Activated naive CD4-positive, alpha-beta T cell treated with anti-CD3 and anti-CD28 coated beads for 36 hours (primary cell): ENCODE measurements at regions of chr3 and their contacts with region 1.

Region 1: GRCh38 chr3:112582244-112582874 is 20.5 kb downstream of the SLC35A5 start:
- DNase-seq: peak; percentile 70
- H3K4me3 Mint-ChIP-seq: no peak overlapping the region
- H3K27ac Mint-ChIP-seq: no peak overlapping the region
- H3K4me1 Mint-ChIP-seq: peaks cover 6% of the 10 kb centered on the region
- H3K27me3 Mint-ChIP-seq: no peaks in the 10 kb centered on the region

Region 2: GRCh38 chr3:112602217-112602838 is 20.0 kb after region 1 on chr3:
- CTCF ChIA-PET with region 1: interaction called, 11 read pairs
- intact Hi-C with region 1: no loop called
- DNase-seq: no peak
- H3K4me3 Mint-ChIP-seq: no peak overlapping the region
- H3K27ac Mint-ChIP-seq: no peak overlapping the region
- H3K4me1 Mint-ChIP-seq: peaks cover 19% of the 10 kb centered on the region
- H3K27me3 Mint-ChIP-seq: peaks cover 11% of the 10 kb centered on the region

Region 3: GRCh38 chr3:112619295-112619694 is 36.9 kb after region 1 on chr3:
- CTCF ChIA-PET with region 1: interaction called, 10 read pairs
- intact Hi-C with region 1: no loop called
- DNase-seq: no peak
- H3K4me3 Mint-ChIP-seq: no peak overlapping the region
- H3K27ac Mint-ChIP-seq: no peak overlapping the region
- H3K4me1 Mint-ChIP-seq: no peaks in the 10 kb centered on the region
- H3K27me3 Mint-ChIP-seq: peaks cover 4% of the 10 kb centered on the region

Region 4: GRCh38 chr3:112635671-112636070 is 53.3 kb after region 1 on chr3:
- CTCF ChIA-PET with region 1: interaction called, 7 read pairs
- intact Hi-C with region 1: loop called (anchors 2 kb)
- DNase-seq: no peak
- H3K4me3 Mint-ChIP-seq: no peak overlapping the region
- H3K27ac Mint-ChIP-seq: no peak overlapping the region
- H3K4me1 Mint-ChIP-seq: peaks cover 7% of the 10 kb centered on the region
- H3K27me3 Mint-ChIP-seq: peaks cover 3% of the 10 kb centered on the region

Region 5: DNA sequence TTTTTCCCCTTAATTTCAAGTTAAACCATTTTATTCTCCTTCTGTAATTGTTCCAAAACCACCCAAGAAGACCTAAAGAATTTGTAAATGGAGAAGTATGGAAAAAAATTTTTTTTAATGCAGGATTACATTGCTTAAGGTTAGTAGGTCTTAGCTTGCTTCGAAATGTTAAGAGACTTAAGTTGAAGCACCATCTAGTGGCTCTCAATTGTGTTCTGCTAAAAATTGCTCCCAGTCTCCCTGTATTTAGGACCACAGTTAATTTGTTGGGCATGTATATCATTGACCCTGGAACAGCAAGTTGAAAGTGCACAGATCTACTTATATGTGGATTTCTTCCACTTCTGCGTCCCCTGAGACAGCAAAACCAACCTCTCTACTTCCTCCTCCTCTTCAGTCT is 231.9 kb after region 1 on chr3:
- CTCF ChIA-PET with region 1: no interaction called
- intact Hi-C with region 1: loop called (anchors 1 kb)
- DNase-seq: no peak
- H3K4me3 Mint-ChIP-seq: no peak overlapping the region
- H3K27ac Mint-ChIP-seq: no peak overlapping the region
- H3K4me1 Mint-ChIP-seq: peaks cover 8% of the 10 kb centered on the region
- H3K27me3 Mint-ChIP-seq: no peaks in the 10 kb centered on the region

Region 6: GRCh38 chr3:112979240-112979832 is 397.0 kb after region 1 on chr3:
- CTCF ChIA-PET with region 1: interaction called, 4 read pairs
- intact Hi-C with region 1: loop called (anchors 1 kb)
- DNase-seq: no peak
- H3K4me3 Mint-ChIP-seq: no peak overlapping the region
- H3K27ac Mint-ChIP-seq: no peak overlapping the region
- H3K4me1 Mint-ChIP-seq: peaks cover 64% of the 10 kb centered on the region
- H3K27me3 Mint-ChIP-seq: no peaks in the 10 kb centered on the region

Region 7: DNA sequence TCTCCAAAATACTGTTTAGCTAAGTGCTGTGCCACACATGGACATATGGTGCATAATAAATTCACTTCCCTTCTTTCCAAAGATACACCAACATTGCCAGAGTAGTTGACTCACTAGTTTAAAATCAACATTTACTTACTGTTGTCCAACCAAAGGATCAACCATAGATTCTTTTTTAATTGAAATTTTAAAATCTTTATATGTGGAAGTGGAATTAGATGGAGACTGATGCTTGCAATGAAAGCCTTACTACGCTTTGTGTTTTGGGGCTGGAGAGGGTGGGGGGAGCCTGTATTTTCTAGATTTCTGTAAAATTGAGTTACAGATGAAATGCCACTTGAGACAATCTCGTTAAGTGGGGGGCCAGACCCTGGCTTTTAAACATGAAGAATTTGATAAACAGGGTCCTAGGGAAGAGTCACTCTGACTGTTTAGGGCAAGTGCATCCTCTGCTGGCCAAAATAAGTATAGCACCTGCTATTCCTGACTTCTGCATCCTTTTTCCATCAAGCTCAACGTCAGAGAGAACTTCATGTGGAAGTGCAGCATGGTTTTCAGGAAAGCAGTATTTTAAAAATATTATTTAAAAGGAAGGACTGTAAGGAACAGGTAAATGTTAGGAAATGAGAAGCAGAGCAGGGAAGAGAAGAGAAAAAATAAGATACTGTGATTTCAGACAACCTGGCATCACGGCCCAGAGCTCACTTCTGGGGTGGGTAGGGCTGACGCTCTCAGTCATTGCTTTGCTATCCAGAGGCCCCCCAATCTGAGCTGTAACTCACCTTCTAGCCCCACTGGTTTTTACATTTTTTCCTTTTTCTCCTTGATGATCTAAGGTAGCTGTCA is 705.7 kb after region 1 on chr3:
- CTCF ChIA-PET with region 1: no interaction called
- intact Hi-C with region 1: loop called (anchors 2 kb)
- DNase-seq: peak; percentile 67
- H3K4me3 Mint-ChIP-seq: no peak overlapping the region
- H3K27ac Mint-ChIP-seq: no peak overlapping the region
- H3K4me1 Mint-ChIP-seq: peaks cover 6% of the 10 kb centered on the region
- H3K27me3 Mint-ChIP-seq: no peaks in the 10 kb centered on the region